ENCODE measurements at regions of chr9 and their contacts with region 1.

Region 1: DNA sequence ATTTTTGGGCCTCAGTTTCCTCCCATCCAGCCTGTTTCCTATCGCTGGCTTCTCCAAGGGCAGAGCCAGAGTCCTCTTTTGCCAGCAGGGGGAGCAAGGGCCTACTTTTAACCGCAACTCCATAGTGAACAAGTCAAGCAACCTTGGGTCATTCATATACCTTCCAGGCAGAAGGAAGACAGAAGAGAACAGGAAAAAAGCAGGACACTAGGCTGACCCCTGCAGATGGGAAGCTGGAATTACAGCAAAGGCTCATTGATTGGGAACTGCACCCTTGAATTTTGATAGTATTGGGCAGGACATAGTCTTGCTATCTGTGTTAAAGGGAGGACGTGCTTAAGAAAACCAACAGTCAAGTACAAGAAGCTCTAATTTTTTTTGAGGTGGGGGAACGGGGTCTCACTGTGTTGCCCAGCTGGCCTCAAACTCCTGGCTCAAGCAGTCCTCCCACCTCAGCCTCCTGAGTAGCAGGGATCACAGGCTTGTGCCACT is 30.1 kb downstream of the QRFP start:
- DNase-seq: peak; percentile 90
- H3K27ac ChIP-seq: no peak overlapping the region
- CTCF ChIP-seq: peak; percentile 99

Region 2: GRCh38 chr9:130693426-130694191 is 172.9 kb before region 1 on chr9 and contains the start of gene EXOSC2:
- CTCF ChIA-PET with region 1: interaction called, 10 read pairs
- POLR2A ChIA-PET with region 1: no interaction called
- DNase-seq: peak; percentile 99
- H3K27ac ChIP-seq: peak within 1 kb of the TSS; percentile 72
- CTCF ChIP-seq: no peak

Region 3: DNA sequence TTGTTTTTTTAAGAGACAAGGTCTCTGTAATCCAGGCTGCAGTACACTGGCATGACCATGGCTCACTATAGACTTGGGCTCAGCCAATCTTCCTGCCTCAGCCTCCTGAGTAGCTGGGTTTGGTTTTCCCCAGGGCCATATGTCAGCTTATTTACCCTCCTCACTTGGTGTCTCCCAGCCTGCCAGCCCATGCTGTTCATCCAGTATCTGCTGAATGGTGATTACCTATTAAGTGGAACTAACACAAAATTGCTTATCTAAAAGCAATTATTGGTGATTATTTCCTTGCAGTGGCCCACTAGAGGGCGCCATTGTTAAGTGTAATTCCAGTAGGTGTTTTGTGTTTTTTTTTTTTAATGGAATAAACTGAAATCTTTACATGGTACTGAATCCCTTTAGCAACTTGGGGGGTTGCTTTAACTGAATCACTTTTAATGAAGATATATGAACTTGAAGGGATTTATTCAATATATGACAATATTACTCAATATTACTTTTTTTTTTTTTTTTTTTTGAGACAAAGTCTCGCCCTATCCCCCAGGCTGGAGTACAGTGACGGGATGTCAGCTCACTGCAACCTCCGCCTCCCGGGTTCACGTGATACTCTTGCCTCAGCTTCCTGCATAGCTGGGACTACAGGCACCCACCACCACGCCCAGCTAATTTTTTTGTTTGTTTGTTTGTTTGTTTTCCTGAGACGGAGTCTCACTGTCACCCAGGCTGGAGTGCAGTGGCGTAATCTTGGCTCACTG is 159.1 kb before region 1 on chr9:
- CTCF ChIA-PET with region 1: interaction called, 46 read pairs
- POLR2A ChIA-PET with region 1: interaction called, 5 read pairs
- DNase-seq: peak; percentile 57
- H3K27ac ChIP-seq: peak overlapping the region; percentile 16
- CTCF ChIP-seq: peak; percentile 95

Region 4: GRCh38 chr9:130888146-130888885 is 21.8 kb after region 1 on chr9:
- CTCF ChIA-PET with region 1: interaction called, 10 read pairs
- POLR2A ChIA-PET with region 1: no interaction called
- DNase-seq: no peak
- H3K27ac ChIP-seq: peak overlapping the region; percentile 75
- CTCF ChIP-seq: no peak

Region 5: DNA sequence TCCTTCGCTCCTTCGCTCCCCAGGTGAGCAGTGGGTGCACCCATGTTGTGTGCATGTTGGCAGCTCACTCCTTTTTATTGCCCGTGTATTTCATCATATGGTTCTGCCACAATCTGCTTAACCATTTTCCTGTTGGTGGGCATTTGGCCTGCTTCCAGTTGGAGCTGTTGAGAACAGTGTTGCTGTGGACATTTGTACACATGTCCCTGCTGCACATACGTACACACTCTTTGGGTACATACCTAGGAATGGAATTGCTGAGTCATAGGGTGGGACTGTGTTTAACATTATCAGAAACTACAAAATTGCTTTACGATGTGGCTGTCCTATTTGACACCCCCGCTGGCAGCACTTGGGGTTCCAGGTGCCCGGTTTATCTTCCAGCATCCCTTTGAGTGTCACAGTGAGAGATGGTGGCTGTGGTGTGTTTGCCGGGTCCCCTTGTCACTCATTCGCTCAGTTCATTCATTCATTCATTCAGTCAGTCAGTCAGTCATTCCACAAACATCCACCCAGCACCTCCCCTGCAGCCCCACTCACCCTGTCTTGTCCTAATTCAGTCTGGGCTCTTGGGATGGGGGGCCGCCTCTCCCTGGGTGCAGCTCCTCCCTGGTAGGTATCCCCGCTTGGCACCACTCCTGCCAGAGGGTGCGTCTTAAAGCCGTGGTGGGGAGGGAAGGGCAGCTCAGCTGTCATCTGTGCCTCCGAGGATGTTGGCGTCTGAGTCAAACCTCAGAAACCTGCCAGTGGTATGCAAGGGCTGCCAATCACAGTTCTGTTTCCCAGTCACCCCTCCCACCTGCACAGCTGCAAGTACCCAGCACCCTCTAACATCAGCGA is 80.5 kb after region 1 on chr9:
- CTCF ChIA-PET with region 1: interaction called, 15 read pairs
- POLR2A ChIA-PET with region 1: no interaction called
- DNase-seq: peak; percentile 96
- H3K27ac ChIP-seq: peak overlapping the region; percentile 85
- CTCF ChIP-seq: no peak

Region 6: GRCh38 chr9:131046581-131047202 is 180.2 kb after region 1 on chr9:
- CTCF ChIA-PET with region 1: interaction called, 26 read pairs
- POLR2A ChIA-PET with region 1: no interaction called
- DNase-seq: peak; percentile 83
- H3K27ac ChIP-seq: no peak overlapping the region
- CTCF ChIP-seq: peak; percentile 99

Region 7: GRCh38 chr9:131366761-131367401 is 500.4 kb after region 1 on chr9:
- CTCF ChIA-PET with region 1: no interaction called
- POLR2A ChIA-PET with region 1: no interaction called
- DNase-seq: peak; percentile 83
- H3K27ac ChIP-seq: peak overlapping the region; percentile 73
- CTCF ChIP-seq: peak; percentile 65

Region 8: GRCh38 chr9:131382850-131383729 is 516.6 kb after region 1 on chr9:
- CTCF ChIA-PET with region 1: no interaction called
- POLR2A ChIA-PET with region 1: no interaction called
- DNase-seq: peak; percentile 92
- H3K27ac ChIP-seq: peak overlapping the region; percentile 70
- CTCF ChIP-seq: no peak

Measured in RWPE1 (cell line).